HCT116 (cell line): ENCODE measurements at regions of chr10 and their contacts with region 1.

Region 1: GRCh38 chr10:122703439-122704118 is 3.9 kb upstream of the C10orf120 start:
- DNase-seq: peak; percentile 47
- ATAC-seq: peak; percentile 99
- H3K4me3 ChIP-seq: no peak overlapping the region
- H3K27ac ChIP-seq: no peak overlapping the region
- H3K4me1 ChIP-seq: no peaks in the 10 kb centered on the region
- H3K27me3 ChIP-seq: peaks cover 15% of the 10 kb centered on the region
- CTCF ChIP-seq: peak; percentile 92 to 99 (median 99)
- POLR2A ChIP-seq: no peak
- RAD21 ChIP-seq: peak; percentile 99

Region 2: GRCh38 chr10:120942806-120943413 is 1760.7 kb before region 1 on chr10:
- CTCF ChIA-PET with region 1: no interaction called
- POLR2A ChIA-PET with region 1: no interaction called
- RAD21 ChIA-PET with region 1: no interaction called
- intact Hi-C with region 1: loop called (anchors 10 kb)
- DNase-seq: peak; percentile 81
- ATAC-seq: peak; percentile 96
- H3K4me3 ChIP-seq: peak overlapping the region; percentile 27 to 48
- H3K27ac ChIP-seq: no peak overlapping the region
- H3K4me1 ChIP-seq: peaks cover 0 to 13% of the 10 kb centered on the region in 2 experiments; a peak in 3 of 4 replicates
- H3K27me3 ChIP-seq: no peaks in the 10 kb centered on the region
- CTCF ChIP-seq: peak; percentile 85 to 96 (median 95)
- POLR2A ChIP-seq: no peak
- RAD21 ChIP-seq: peak; percentile 99

Region 3: GRCh38 chr10:122142641-122143237 is 560.8 kb before region 1 on chr10:
- CTCF ChIA-PET with region 1: no interaction called
- POLR2A ChIA-PET with region 1: no interaction called
- RAD21 ChIA-PET with region 1: no interaction called
- intact Hi-C with region 1: loop called (anchors 5 kb)
- DNase-seq: no peak
- ATAC-seq: peak; percentile 52
- H3K4me3 ChIP-seq: no peak overlapping the region
- H3K27ac ChIP-seq: no peak overlapping the region; the same call in 1 of the 2 replicates
- H3K4me1 ChIP-seq: peaks cover 31 to 45% of the 10 kb centered on the region in 2 experiments
- H3K27me3 ChIP-seq: no peaks in the 10 kb centered on the region
- CTCF ChIP-seq: peak; percentile 70 to 100 (median 99)
- POLR2A ChIP-seq: no peak
- RAD21 ChIP-seq: peak; percentile 92

Region 4: DNA sequence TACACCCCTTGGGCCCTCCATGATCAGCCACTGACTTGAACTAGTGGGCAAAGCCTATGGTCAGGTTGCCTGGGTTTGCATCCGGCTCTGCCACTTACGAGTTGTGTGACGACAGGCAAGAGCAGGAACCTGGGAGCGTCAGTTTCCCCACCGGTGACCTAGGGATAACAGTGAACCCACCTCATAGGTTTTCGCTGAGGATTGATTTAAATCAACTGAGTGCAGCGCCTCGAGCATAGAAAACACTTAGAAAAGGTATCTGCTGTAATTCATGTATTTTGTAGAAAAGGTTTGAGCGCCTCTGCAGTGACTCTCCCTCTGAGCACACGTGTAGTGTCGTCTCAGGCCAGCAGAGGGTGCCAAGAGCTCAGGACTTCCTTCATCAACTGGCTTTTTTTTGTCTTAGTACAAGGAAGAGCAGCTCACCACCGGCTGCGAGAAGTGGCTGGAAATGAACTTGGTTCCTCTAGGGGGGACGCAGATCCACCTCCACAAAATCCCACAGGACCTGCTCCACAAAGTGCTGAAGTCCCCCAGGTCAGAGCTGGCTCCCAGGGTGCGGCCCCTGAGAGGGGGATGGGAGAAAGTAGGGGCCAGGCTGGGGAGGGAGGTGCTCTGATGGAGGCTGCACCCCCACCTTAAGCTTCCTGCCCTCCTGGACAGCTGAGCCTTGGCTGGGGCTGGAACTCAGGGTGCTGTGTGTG is 404.8 kb before region 1 on chr10:
- CTCF ChIA-PET with region 1: interaction called, 14 read pairs
- POLR2A ChIA-PET with region 1: no interaction called
- RAD21 ChIA-PET with region 1: no interaction called
- intact Hi-C with region 1: loop called (anchors 1 kb)
- DNase-seq: peak; percentile 73
- ATAC-seq: peak; percentile 95
- H3K4me3 ChIP-seq: peak overlapping the region; percentile 22 to 35
- H3K27ac ChIP-seq: no peak overlapping the region; the same call in 1 of the 2 replicates
- H3K4me1 ChIP-seq: peaks cover 0 to 18% of the 10 kb centered on the region in 2 experiments; a peak in 2 of 4 replicates
- H3K27me3 ChIP-seq: no peaks in the 10 kb centered on the region
- CTCF ChIP-seq: peak; percentile 94 to 99 (median 98)
- POLR2A ChIP-seq: no peak
- RAD21 ChIP-seq: peak; percentile 100

Region 5: GRCh38 chr10:122435212-122435827 is 268.3 kb before region 1 on chr10:
- CTCF ChIA-PET with region 1: no interaction called
- POLR2A ChIA-PET with region 1: no interaction called
- RAD21 ChIA-PET with region 1: no interaction called
- intact Hi-C with region 1: loop called (anchors 2 kb)
- DNase-seq: peak; percentile 45
- ATAC-seq: peak; percentile 76
- H3K4me3 ChIP-seq: no peak overlapping the region
- H3K27ac ChIP-seq: no peak overlapping the region
- H3K4me1 ChIP-seq: no peaks in the 10 kb centered on the region
- H3K27me3 ChIP-seq: no peaks in the 10 kb centered on the region
- CTCF ChIP-seq: peak; percentile 44 to 96 (median 86)
- POLR2A ChIP-seq: no peak
- RAD21 ChIP-seq: peak; percentile 95

Region 6: GRCh38 chr10:122648599-122649428 is 54.8 kb before region 1 on chr10:
- CTCF ChIA-PET with region 1: interaction called, 21 read pairs
- POLR2A ChIA-PET with region 1: no interaction called
- RAD21 ChIA-PET with region 1: no interaction called
- intact Hi-C with region 1: loop called (anchors 1 kb)
- DNase-seq: peak; percentile 49
- ATAC-seq: peak; percentile 89
- H3K4me3 ChIP-seq: no peak overlapping the region
- H3K27ac ChIP-seq: no peak overlapping the region
- H3K4me1 ChIP-seq: no peaks in the 10 kb centered on the region
- H3K27me3 ChIP-seq: peaks cover 65% of the 10 kb centered on the region
- CTCF ChIP-seq: peak; percentile 84 to 96 (median 95); a peak in 5 of 6 replicates
- POLR2A ChIP-seq: no peak
- RAD21 ChIP-seq: peak; percentile 85

Region 7: DNA sequence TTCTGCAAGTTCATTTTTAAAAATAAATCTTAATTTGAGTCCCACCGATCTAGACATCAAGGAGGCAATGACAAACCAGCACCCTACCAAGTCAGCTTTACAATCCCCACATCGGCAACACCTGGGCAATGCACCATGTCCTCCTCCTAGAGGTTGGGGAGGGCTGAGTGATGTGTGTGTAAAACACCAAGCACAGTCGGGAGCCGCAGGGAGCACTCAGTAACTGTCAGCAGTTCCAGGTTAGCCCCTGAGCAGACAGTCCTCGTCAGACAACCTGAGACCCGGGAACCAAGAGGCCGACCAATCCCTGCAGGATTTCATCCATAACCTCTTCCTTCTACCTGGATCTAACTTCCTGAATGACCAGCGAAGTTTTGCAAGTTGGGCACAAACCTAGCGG is 12.0 kb after region 1 on chr10:
- CTCF ChIA-PET with region 1: no interaction called
- POLR2A ChIA-PET with region 1: no interaction called
- RAD21 ChIA-PET with region 1: no interaction called
- intact Hi-C with region 1: no loop called
- DNase-seq: no peak
- ATAC-seq: no peak
- H3K4me3 ChIP-seq: no peak overlapping the region
- H3K27ac ChIP-seq: no peak overlapping the region
- H3K4me1 ChIP-seq: no peaks in the 10 kb centered on the region
- H3K27me3 ChIP-seq: peaks cover 94% of the 10 kb centered on the region
- CTCF ChIP-seq: no peak
- POLR2A ChIP-seq: no peak
- RAD21 ChIP-seq: no peak